Activated CD8-positive, alpha-beta T cell treated with anti-CD3 and anti-CD28 coated beads for 36 hours (primary cell): ENCODE measurements at regions of chr5 and their contacts with region 1.

Region 1: DNA sequence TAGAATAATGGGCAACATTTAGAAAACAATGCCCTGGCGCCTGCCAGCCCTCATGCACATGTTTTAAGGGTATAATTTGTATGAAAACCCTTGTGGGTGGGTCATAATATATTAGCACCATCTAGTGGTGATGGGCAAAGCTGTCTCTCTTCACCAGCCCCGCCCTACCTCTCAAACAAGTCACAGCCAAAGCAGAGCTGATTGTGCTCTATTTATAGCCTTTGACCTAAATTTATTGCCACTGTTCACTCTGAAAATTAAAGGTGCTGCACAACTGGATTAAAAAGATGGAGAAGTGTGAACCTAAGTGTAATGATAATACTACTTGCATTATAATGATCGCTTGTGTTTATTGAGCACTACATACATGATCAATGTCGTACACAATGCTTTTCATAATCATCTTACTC is 131.9 kb upstream of the ANKH start:
- DNase-seq: peak; percentile 76
- ATAC-seq: peak; percentile 97
- H3K4me3 Mint-ChIP-seq: no peak overlapping the region
- H3K27ac Mint-ChIP-seq: no peak overlapping the region
- H3K4me1 Mint-ChIP-seq: peaks cover 7% of the 10 kb centered on the region
- H3K27me3 Mint-ChIP-seq: peaks cover 2% of the 10 kb centered on the region
- CTCF ChIP-seq: peak; percentile 67

Region 2: DNA sequence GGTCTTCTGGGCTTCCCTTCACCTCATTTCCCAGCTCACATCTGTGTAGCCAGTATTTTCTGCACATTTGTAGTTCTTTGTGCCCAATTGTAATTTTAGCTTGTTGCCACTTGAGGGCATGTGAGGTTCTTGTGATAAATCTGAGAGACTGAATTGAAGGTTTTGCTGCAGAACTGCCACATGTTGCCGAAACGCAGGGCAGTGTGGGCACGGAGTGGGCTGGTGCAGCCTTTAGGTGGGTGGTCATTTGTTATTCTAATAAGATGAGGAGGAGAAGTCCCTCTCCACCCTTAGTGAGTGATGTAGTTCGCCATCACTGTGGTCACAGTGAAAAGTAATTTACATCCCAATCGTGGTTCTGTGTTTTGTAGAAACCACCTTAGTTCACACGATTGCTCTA is 317.8 kb before region 1 on chr5:
- CTCF ChIA-PET with region 1: interaction called, 21 read pairs
- POLR2A ChIA-PET with region 1: no interaction called
- intact Hi-C with region 1: no loop called
- DNase-seq: peak; percentile 77
- ATAC-seq: peak; percentile 90
- H3K4me3 Mint-ChIP-seq: peak overlapping the region; percentile 24
- H3K27ac Mint-ChIP-seq: peak overlapping the region; percentile 78
- H3K4me1 Mint-ChIP-seq: peaks cover 18% of the 10 kb centered on the region
- H3K27me3 Mint-ChIP-seq: no peaks in the 10 kb centered on the region
- CTCF ChIP-seq: peak; percentile 87

Region 3: DNA sequence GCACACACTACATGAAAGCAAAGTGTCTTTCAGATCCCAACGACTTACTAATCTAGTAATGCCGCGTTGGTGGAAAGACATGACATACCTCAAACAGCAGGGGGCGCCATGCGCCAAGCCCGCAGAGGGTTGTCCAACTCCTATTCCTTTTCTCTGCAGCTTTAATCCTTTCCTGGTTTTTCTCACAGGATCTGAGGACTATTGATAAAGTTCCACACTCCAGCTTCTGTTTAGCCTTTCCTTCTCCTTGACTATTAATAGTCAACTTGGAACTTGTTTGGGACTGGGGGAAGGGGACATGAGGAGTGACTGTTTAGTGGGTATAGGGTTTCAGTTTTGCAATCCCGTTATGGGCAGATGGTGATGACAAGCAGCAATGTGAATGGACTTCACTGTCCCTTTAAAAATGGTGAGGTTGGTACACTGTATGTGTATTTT is 276.1 kb before region 1 on chr5:
- CTCF ChIA-PET with region 1: interaction called, 123 read pairs
- POLR2A ChIA-PET with region 1: no interaction called
- intact Hi-C with region 1: loop called (anchors 1 kb)
- DNase-seq: peak; percentile 75
- ATAC-seq: peak; percentile 70
- H3K4me3 Mint-ChIP-seq: no peak overlapping the region
- H3K27ac Mint-ChIP-seq: no peak overlapping the region
- H3K4me1 Mint-ChIP-seq: peaks cover 6% of the 10 kb centered on the region
- H3K27me3 Mint-ChIP-seq: no peaks in the 10 kb centered on the region
- CTCF ChIP-seq: peak; percentile 91

Region 4: GRCh38 chr5:14946815-14947640 is 56.5 kb before region 1 on chr5:
- CTCF ChIA-PET with region 1: interaction called, 40 read pairs
- POLR2A ChIA-PET with region 1: interaction called, 3 read pairs
- intact Hi-C with region 1: loop called (anchors 5 kb)
- DNase-seq: peak; percentile 50
- ATAC-seq: peak; percentile 92
- H3K4me3 Mint-ChIP-seq: no peak overlapping the region
- H3K27ac Mint-ChIP-seq: no peak overlapping the region
- H3K4me1 Mint-ChIP-seq: peaks cover 3% of the 10 kb centered on the region
- H3K27me3 Mint-ChIP-seq: peaks cover 4% of the 10 kb centered on the region
- CTCF ChIP-seq: peak; percentile 33

Region 5: GRCh38 chr5:14988223-14988622 is 15.3 kb before region 1 on chr5:
- CTCF ChIA-PET with region 1: interaction called, 14 read pairs
- POLR2A ChIA-PET with region 1: interaction called, 3 read pairs
- intact Hi-C with region 1: no loop called
- DNase-seq: no peak
- ATAC-seq: no peak
- H3K4me3 Mint-ChIP-seq: no peak overlapping the region
- H3K27ac Mint-ChIP-seq: no peak overlapping the region
- H3K4me1 Mint-ChIP-seq: peaks cover 33% of the 10 kb centered on the region
- H3K27me3 Mint-ChIP-seq: no peaks in the 10 kb centered on the region
- CTCF ChIP-seq: no peak

Region 6: GRCh38 chr5:15034379-15034778 is 30.9 kb after region 1 on chr5:
- CTCF ChIA-PET with region 1: no interaction called
- POLR2A ChIA-PET with region 1: no interaction called
- intact Hi-C with region 1: no loop called
- DNase-seq: no peak
- ATAC-seq: no peak
- H3K4me3 Mint-ChIP-seq: no peak overlapping the region
- H3K27ac Mint-ChIP-seq: no peak overlapping the region
- H3K4me1 Mint-ChIP-seq: no peaks in the 10 kb centered on the region
- H3K27me3 Mint-ChIP-seq: peaks cover 6% of the 10 kb centered on the region
- CTCF ChIP-seq: no peak

Region 7: DNA sequence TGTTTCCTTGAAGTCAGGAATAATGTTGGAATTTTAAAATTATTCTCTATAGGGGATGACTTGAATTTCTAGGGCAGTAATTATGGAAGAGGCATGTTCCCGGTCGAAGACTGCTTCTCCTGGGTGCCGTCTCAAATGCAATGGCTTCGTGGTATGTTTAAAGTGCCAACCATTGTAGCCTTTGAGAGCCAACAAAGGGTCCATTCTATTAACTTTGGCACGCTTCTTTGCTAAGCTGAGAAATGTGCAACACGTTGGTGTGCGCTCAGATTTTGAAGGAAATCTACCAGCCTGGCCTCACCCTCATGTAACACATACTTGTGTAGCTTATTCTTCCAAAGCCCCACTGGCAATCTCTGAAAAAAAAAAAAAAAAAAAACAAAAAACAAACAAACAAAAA is 89.3 kb after region 1 on chr5:
- CTCF ChIA-PET with region 1: no interaction called
- POLR2A ChIA-PET with region 1: no interaction called
- intact Hi-C with region 1: no loop called
- DNase-seq: no peak
- ATAC-seq: no peak
- H3K4me3 Mint-ChIP-seq: no peak overlapping the region
- H3K27ac Mint-ChIP-seq: no peak overlapping the region
- H3K4me1 Mint-ChIP-seq: no peaks in the 10 kb centered on the region
- H3K27me3 Mint-ChIP-seq: no peaks in the 10 kb centered on the region
- CTCF ChIP-seq: no peak